ENCODE measurements at regions of chr19 and their contacts with region 1.

Region 1: GRCh38 chr19:18419195-18419698 is at the start of gene SSBP4:
- DNase-seq: peak in 33 of 42 donors; percentile 58 to 86 (median 71)

Region 2: GRCh38 chr19:18203863-18204393 is 215.3 kb before region 1 on chr19 and contains the start of gene RAB3A:
- intact Hi-C with region 1: loop called (anchors 10 kb)
- DNase-seq: peak; percentile 100

Region 3: DNA sequence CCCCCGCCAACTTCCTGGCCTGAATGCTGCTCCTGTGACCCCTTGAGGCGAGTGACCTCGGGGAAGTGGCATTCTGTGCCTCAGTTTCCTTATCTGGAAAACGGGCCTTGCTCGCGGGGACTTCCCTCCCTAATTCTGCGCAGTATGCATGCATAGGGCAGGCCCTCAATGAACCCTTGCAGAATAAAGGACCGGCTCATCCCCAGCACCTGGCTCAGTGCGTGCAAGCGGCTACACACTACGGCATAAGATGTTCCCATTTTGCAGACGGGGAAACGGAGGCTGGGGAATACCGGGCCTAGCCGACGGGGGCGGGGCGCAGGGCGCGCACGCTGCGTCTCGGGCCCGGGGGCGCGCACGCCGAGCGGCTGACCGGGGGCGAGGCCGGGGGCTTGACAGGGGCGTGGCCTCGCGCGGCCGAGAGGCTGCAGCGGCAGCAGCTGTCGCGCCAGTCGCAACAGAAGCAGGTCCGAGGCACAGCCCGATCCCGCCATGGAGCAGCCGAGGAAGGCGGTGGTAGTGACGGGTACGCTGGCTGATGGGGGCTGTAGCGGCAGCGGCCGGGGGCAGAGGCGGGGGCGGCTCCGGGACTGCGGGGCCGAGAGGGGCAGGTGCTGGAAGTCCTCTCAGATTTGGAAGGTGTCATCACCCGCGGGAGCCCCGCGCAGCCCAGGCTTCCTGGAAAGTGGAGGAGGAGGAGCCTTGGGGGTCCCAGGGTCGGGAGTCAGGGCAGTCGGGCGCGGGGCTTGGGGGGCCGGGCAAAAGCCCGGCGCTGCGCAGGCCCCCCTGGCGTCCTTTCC is 78.9 kb before region 1 on chr19 and contains the start of gene PGPEP1:
- intact Hi-C with region 1: loop called (anchors 10 kb)
- DNase-seq: peak; percentile 44 to 91 (median 82)

Region 4: GRCh38 chr19:18408053-18408476 is 11.2 kb before region 1 on chr19:
- intact Hi-C with region 1: no loop called
- DNase-seq: no peak